Heart left ventricle (tissue), 16 donors: ENCODE measurements at regions of chr9 and their contacts with region 1.

Region 1: GRCh38 chr9:128455849-128456612 is at the start of gene ODF2:
- DNase-seq: peak; percentile 98 to 99 (median 99)
- ATAC-seq: peak; percentile 90 to 97 (median 94)
- H3K4me3 ChIP-seq: peak within 1 kb of the TSS; percentile 61 to 96 (median 86)
- H3K27ac ChIP-seq: peak within 1 kb of the TSS; percentile 71 to 92 (median 87)
- H3K4me1 ChIP-seq: peaks cover 0 to 26% (median 11%) of the 10 kb centered on the region in 12 donors
- H3K27me3 ChIP-seq: no peaks in the 10 kb centered on the region
- CTCF ChIP-seq: no peak
- POLR2A ChIP-seq: peak in 1 of 2 donors; percentile 48
- total RNA-seq, gene ODF2: 10.9 to 20.9 (median 13.7) TPM

Region 2: DNA sequence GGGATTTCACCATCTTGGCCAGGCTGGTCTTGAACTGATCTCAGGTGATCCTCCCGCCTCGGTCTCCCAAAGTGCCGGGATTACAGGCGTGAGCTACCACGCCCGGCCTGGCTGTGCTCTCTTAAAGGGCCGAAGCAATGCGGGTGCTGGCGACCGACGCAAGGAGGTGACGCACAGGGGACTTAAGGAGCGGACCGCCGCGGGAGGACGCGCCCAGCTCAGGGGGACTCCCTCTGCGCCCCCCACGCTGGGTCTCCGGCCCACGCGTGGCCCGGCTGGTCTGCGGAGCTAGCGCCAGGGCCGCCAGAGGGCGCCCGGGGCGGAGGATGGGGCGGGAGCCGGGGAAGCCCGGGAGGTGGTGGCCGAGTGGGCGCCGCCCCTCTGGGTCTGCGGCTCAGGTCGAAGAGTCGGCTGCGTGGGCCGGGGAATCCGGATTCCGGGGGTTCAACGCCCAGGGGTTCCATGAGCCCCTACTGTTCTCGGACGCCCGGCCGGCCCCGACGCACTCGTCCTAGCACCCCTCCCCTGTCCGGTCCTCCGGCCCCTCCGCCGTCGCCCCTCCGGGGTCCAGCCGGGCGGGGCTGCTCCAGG is 35.9 kb before region 1 on chr9:
- intact Hi-C with region 1: loop called in 1 of 10 experiments (anchors 2 kb)
- DNase-seq: peak; percentile 74 to 87 (median 79)
- ATAC-seq: peak; percentile 66 to 90 (median 87)
- H3K4me3 ChIP-seq: peak overlapping the region; percentile 56 to 99 (median 93)
- H3K27ac ChIP-seq: peak overlapping the region in 11 of 12 donors; percentile 64 to 87 (median 78)
- H3K4me1 ChIP-seq: peaks cover 0 to 28% (median 16%) of the 10 kb centered on the region in 12 donors
- H3K27me3 ChIP-seq: peaks cover 0 to 32% (median 13%) of the 10 kb centered on the region in 9 donors
- CTCF ChIP-seq: peak; percentile 78 to 98 (median 86)
- POLR2A ChIP-seq: peak in 1 of 2 donors; percentile 11

Region 3: GRCh38 chr9:128504485-128505413 is 48.7 kb after region 1 on chr9 and contains the start of gene GLE1:
- intact Hi-C with region 1: loop called in 2 of 10 experiments (anchors 5 kb)
- DNase-seq: peak; percentile 95 to 99 (median 96)
- ATAC-seq: peak; percentile 99 to 100 (median 100)
- H3K4me3 ChIP-seq: peak within 1 kb of the TSS; percentile 45 to 99 (median 78)
- H3K27ac ChIP-seq: peak within 1 kb of the TSS; percentile 20 to 90 (median 80)
- H3K4me1 ChIP-seq: peaks cover 0 to 24% (median 19%) of the 10 kb centered on the region in 12 donors
- H3K27me3 ChIP-seq: no peaks in the 10 kb centered on the region
- CTCF ChIP-seq: no peak
- POLR2A ChIP-seq: peak in 1 of 2 donors; percentile 80
- total RNA-seq, gene GLE1: 17.2 to 23.5 (median 19.9) TPM

Region 4: DNA sequence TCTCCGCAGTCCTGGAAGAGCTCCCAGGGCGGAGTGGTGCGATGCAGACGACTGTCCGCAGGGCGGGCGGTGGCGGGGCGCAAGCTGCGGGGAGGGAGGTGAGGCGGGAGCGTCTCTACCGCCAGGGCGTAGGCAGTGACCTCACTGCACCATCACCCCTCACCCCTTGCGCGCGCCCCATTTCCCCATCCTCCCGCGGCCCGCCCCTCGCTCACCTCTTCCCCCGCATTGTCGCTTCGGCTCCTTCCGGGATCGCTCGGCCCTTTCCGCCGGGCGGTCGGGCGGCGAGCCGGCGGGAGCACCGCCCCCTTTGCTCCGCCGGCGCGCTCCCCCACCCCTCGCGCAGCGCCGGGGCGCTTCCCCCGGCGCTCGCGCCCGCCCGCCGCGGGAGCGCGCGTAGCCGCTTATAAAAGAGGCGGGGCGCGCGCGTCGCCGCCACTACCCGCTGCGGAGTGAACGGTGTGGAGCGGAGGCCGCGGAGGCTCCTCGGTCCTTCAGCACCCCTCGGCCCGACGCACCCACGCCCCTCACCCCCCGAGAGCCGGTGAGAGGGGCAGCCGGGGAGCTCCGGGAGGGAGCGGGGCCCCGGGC is 96.2 kb after region 1 on chr9 and contains the start of gene SPTAN1:
- intact Hi-C with region 1: loop called in 3 of 10 experiments (anchors 1 to 5 kb)
- DNase-seq: peak; percentile 92 to 96 (median 93)
- ATAC-seq: peak; percentile 64 to 89 (median 84)
- H3K4me3 ChIP-seq: peak within 1 kb of the TSS; percentile 77 to 98 (median 95)
- H3K27ac ChIP-seq: peak within 1 kb of the TSS; percentile 94 to 100 (median 98)
- H3K4me1 ChIP-seq: peaks cover 16 to 71% (median 57%) of the 10 kb centered on the region in 12 donors
- H3K27me3 ChIP-seq: no peaks in the 10 kb centered on the region
- CTCF ChIP-seq: no peak
- POLR2A ChIP-seq: peak; percentile 83 to 99
- total RNA-seq, gene SPTAN1: 218 to 472 (median 285) TPM